ENCODE measurements at regions of chr1 and their contacts with region 1.

Region 1: GRCh38 chr1:31564134-31564989 is 12.0 kb upstream of the TINAGL1 start:
- DNase-seq: peak; percentile 47
- ATAC-seq: peak; percentile 94
- H3K4me3 ChIP-seq: no peak overlapping the region
- H3K27ac ChIP-seq: no peak overlapping the region
- H3K4me1 ChIP-seq: peaks cover 2% of the 10 kb centered on the region; the same call in 1 of the 2 replicates
- H3K27me3 ChIP-seq: peaks cover 5% of the 10 kb centered on the region; the same call in 1 of the 2 replicates
- CTCF ChIP-seq: peak; percentile 94
- POLR2A ChIP-seq: 0 out of 2 replicates have a peak, but pooled peaks have one; percentile 32
- RAD21 ChIP-seq: peak; percentile 93

Region 2: DNA sequence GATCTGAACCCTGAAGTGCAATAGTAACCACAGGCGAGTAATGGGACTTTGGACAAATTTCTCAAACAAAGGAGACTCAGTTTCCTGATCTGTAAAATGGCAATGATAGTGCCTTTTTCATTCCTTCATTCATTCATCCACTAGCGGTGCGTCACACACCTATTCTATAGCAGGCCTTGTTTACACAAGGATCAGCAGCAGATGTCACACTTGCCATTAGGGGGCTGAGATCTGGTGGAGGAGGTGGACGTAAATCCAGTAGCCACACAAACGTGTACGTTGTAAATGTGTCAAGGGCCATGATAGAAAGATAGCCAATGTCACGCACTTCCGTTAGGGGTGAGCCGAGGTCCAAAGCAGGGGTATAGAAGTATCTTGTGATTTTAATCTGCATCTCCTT is 117.2 kb before region 1 on chr1:
- CTCF ChIA-PET with region 1: no interaction called
- POLR2A ChIA-PET with region 1: no interaction called
- dilution Hi-C with region 1: no loop called
- in situ Hi-C with region 1: no loop called
- intact Hi-C with region 1: no loop called
- DNase-seq: no peak
- ATAC-seq: no peak
- H3K4me3 ChIP-seq: no peak overlapping the region
- H3K27ac ChIP-seq: no peak overlapping the region
- H3K4me1 ChIP-seq: no peaks in the 10 kb centered on the region
- H3K27me3 ChIP-seq: peaks cover 23% of the 10 kb centered on the region
- CTCF ChIP-seq: no peak
- POLR2A ChIP-seq: no peak
- RAD21 ChIP-seq: no peak

Region 3: DNA sequence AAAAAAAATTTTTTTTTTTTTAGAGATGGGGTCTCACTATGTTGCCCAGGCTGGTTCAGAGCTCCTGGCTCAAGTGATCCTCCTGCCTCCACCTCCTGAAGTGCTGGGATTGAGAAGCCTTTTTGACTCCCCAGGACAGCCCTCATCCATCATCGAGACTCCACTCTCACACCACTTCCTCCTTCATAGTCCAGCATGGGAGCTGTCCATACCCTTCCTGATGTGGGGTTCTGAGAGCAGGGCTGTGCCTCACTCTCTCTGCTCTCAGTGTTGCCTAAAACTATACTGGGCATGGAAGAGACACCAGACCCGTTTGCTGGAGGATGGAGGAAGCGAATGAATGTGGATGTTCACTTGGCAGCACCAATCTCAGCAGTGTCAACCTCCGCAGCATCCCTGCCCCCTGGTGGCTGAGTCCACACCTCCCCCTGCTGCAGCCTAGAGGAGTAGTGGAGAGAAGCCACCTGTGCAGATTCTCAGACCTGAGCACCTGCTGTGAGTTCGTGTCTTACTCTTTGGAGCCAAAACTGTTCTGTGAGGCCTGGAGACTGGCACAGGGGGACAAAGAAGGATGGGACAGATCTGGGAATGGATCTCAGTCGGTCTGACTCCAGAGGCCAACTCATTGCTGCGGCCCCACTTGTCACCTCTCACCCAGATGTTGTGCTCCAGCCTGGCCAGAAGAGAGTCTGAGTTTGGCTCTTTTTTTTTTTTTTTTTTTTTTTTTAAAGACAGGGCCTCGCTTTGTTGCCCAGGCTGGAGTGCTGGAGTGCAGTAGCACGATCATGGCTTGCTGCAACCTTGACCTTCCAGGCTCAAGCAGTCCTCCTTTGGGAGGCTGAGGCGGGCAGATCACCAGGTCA is 29.6 kb after region 1 on chr1:
- CTCF ChIA-PET with region 1: interaction called, 5 read pairs
- POLR2A ChIA-PET with region 1: no interaction called
- dilution Hi-C with region 1: no loop called
- in situ Hi-C with region 1: no loop called
- intact Hi-C with region 1: loop called (anchors 1 kb)
- DNase-seq: peak; percentile 56
- ATAC-seq: peak; percentile 94
- H3K4me3 ChIP-seq: no peak overlapping the region
- H3K27ac ChIP-seq: no peak overlapping the region
- H3K4me1 ChIP-seq: no peaks in the 10 kb centered on the region
- H3K27me3 ChIP-seq: peaks cover 16% of the 10 kb centered on the region
- CTCF ChIP-seq: peak; percentile 80
- POLR2A ChIP-seq: no peak
- RAD21 ChIP-seq: peak; percentile 78

Region 4: DNA sequence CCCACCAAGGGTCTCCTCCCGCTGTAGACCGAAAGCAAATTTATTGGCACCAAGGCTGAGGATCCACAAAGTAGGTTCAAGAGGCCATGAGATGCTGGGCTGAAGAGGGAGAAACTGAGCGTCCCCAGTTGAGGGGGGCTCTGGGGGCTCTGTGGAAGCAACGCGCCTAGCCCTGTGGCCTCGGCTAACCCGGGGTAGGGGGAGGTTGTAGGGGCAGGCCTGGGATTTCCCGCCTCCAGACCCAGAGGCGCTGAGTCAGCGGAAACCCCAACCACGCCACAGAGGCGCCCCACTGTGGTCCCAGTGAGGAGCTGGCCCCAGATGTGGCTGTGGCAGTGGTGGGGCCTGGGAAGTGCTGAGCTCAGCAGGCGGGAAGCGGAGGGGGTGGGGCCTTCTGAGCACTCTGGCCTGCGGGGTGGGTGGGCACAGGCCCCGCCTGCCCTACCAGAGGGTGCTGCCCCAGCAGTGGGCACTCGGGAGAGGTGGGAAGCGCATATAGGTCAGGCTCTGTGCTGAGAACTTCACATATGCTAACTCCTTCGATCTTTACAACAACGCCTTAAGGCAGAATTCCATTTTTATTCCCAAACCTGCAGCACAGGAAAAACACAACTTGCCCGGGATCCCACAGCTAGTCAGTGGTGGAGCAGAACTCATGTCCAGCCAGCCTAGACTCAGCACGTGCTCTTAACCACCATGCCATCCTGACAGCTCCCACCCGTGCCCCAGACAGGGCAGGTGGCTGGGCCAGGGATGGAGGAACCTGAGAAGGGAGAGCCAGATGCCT is 140.9 kb after region 1 on chr1:
- CTCF ChIA-PET with region 1: interaction called, 3 read pairs
- POLR2A ChIA-PET with region 1: no interaction called
- dilution Hi-C with region 1: no loop called
- in situ Hi-C with region 1: no loop called
- intact Hi-C with region 1: loop called (anchors 2 kb)
- DNase-seq: peak; percentile 55
- ATAC-seq: peak; percentile 13
- H3K4me3 ChIP-seq: no peak overlapping the region
- H3K27ac ChIP-seq: peak overlapping the region; percentile 83
- H3K4me1 ChIP-seq: peaks cover 41% of the 10 kb centered on the region
- H3K27me3 ChIP-seq: no peaks in the 10 kb centered on the region
- CTCF ChIP-seq: peak; percentile 60
- POLR2A ChIP-seq: no peak
- RAD21 ChIP-seq: peak; percentile 71

Region 5: GRCh38 chr1:31745096-31745945 is 181.0 kb after region 1 on chr1:
- CTCF ChIA-PET with region 1: interaction called, 3 read pairs
- POLR2A ChIA-PET with region 1: no interaction called
- dilution Hi-C with region 1: no loop called
- in situ Hi-C with region 1: no loop called
- intact Hi-C with region 1: loop called (anchors 5 kb)
- DNase-seq: peak; percentile 53
- ATAC-seq: peak; percentile 96
- H3K4me3 ChIP-seq: no peak overlapping the region
- H3K27ac ChIP-seq: no peak overlapping the region
- H3K4me1 ChIP-seq: peaks cover 14% of the 10 kb centered on the region; the same call in 1 of the 2 replicates
- H3K27me3 ChIP-seq: no peaks in the 10 kb centered on the region
- CTCF ChIP-seq: peak; percentile 89
- POLR2A ChIP-seq: no peak
- RAD21 ChIP-seq: peak; percentile 85

Region 6: DNA sequence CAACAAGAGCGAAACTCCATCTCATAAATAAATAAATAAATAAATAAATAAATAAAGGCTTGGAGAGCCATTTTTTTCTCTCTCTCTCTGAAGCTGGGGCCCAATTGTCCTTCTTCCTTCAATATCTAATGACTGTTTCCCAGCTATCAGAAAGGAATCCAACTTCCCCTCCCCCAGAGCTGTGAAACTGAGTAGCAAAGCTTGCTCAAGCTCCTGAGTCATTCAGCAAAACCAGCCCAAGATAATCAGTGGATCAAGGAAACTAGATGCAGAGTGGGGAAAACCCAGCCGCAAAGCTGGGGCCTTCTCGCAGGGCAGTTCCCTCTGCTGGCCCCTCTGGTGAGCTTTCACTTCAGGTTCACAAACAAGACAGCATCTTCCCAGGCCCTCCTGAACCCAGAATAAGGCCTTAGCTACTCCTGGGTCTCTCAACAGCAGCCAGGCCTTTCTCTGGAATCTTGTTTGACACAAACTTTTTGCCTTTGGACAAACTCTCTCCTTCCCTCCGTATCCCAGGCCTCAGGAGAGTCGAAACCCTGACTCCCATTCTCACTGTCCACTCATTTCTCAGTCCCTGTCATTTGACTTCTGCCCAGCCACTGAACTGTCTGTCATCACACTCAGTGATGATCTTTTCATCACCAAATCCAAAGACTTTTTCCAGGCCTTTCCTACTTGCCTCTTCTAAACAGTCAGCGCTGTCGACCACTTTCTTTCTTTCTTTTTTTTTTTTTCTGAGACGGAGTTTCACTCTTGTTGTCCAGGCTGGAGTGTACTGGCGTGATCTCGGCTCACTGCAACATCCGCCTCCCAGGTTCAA is 391.8 kb after region 1 on chr1:
- CTCF ChIA-PET with region 1: no interaction called
- POLR2A ChIA-PET with region 1: no interaction called
- dilution Hi-C with region 1: no loop called
- in situ Hi-C with region 1: no loop called
- intact Hi-C with region 1: loop called (anchors 10 kb)
- DNase-seq: peak; percentile 100
- ATAC-seq: peak; percentile 85
- H3K4me3 ChIP-seq: peak overlapping the region; percentile 3; the same call in 1 of the 2 replicates
- H3K27ac ChIP-seq: peak overlapping the region; percentile 96
- H3K4me1 ChIP-seq: peaks cover 23% of the 10 kb centered on the region
- H3K27me3 ChIP-seq: no peaks in the 10 kb centered on the region
- CTCF ChIP-seq: peak; percentile 63
- POLR2A ChIP-seq: peak; percentile 84
- RAD21 ChIP-seq: peak; percentile 74